Activated T-helper 2 cell treated with anti-CD3 and anti-CD28 coated beads, Interferon-gamma antibody, Interleukin-2, Interleukin-4, amounts not matched to agents 10 μg/mL and 5 μg/mL and 100 μg/mL, durations not matched to agents 14 hours and 24 hours and 36 hours (primary cell): ENCODE measurements at regions of chrX and their contacts with region 1.

Region 1: GRCh38 chrX:54891573-54891972 is 29.1 kb upstream of the TRO start:
- DNase-seq: peak; percentile 8
- H3K4me3 Mint-ChIP-seq: no peak overlapping the region
- H3K27ac Mint-ChIP-seq: no peak overlapping the region
- H3K4me1 Mint-ChIP-seq: no peaks in the 10 kb centered on the region
- H3K27me3 Mint-ChIP-seq: peaks cover 2% of the 10 kb centered on the region

Region 2: DNA sequence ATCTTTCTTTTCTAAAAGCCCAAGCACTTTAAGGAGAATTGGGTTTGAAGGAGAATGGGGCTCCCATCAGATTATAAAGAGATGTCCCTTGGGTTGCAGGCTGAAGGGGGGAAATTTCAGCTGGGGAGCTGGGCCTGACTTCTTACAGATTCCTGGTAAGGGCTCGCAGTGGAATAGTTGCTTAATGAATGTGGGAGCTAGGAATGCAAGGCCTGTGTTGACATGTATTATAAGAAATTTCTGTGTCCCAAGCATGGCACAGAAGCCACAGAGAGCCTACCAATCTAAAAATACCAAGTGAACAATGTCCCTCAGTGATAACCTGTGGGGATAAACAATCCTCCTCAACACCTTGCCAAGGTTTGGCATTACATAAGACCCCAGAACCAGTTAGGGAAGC is 494.5 kb before region 1 on chrX:
- intact Hi-C with region 1: no loop called
- DNase-seq: no peak
- H3K4me3 Mint-ChIP-seq: no peak overlapping the region
- H3K27ac Mint-ChIP-seq: no peak overlapping the region
- H3K4me1 Mint-ChIP-seq: no peaks in the 10 kb centered on the region
- H3K27me3 Mint-ChIP-seq: peaks cover 4% of the 10 kb centered on the region

Region 3: DNA sequence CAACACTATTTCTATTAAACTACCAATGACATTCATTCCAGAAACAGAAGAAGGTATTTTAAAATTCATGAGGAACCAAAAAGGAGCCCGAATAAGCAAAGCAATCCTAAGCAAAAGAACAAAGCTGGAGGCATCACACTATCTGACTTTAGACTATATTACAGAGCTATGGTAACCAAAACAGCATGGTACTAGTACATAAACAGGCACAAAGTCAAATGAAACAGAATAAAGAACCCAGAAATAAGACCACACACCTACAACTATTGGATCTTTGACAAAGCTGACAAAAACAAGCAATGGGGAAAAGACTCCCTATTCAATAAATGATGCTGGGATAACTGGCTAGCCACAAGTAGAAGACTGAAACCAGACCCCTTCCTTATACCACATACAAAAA is 215.8 kb before region 1 on chrX:
- intact Hi-C with region 1: no loop called
- DNase-seq: no peak
- H3K4me3 Mint-ChIP-seq: no peak overlapping the region
- H3K27ac Mint-ChIP-seq: no peak overlapping the region
- H3K4me1 Mint-ChIP-seq: no peaks in the 10 kb centered on the region
- H3K27me3 Mint-ChIP-seq: no peaks in the 10 kb centered on the region

Region 4: GRCh38 chrX:55057675-55058249 is 166.2 kb after region 1 on chrX:
- intact Hi-C with region 1: loop called (anchors 1 kb)
- DNase-seq: no peak
- H3K4me3 Mint-ChIP-seq: peak overlapping the region; percentile 42
- H3K27ac Mint-ChIP-seq: no peak overlapping the region
- H3K4me1 Mint-ChIP-seq: peaks cover 11% of the 10 kb centered on the region
- H3K27me3 Mint-ChIP-seq: peaks cover 2% of the 10 kb centered on the region